H1 (cell line): ENCODE measurements at regions of chr10 and their contacts with region 1.

Region 1: DNA sequence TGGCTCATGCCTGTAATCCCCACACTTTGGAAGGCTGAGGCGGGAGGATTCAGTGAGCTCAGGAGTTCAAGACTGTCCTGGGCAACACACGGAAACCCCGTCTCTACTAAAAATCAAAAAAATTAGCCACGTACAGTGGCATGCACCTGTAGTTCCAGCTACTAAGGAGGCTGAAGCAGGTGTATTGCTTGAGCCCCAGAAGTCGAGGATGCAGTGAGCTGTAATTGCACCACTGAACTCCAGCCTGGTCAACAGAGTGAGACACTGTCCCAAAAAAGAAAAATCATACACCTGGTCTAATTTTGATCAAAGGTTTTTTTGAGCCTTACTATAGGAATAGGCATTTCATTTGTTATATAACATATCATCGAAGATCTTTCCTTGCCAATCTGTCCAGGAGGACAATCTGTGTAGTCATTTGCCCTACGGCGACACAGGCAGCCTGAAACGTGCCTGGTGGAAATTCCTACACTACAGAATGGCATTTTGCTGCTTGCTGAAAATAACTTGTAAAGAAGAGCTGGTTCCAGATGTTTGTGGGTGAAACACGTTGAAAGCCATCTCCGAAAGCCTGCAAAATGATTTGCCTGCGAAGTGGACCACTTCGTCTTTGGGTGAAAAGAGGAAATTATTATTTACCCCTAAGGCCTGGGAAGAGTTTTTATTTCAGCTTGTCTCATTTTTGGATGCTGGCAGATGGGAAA is 31.3 kb upstream of the GDI2 start:
- DNase-seq: no peak
- H3K4me3 ChIP-seq: no peak overlapping the region
- H3K27ac ChIP-seq: no peak overlapping the region
- H3K4me1 ChIP-seq: peaks cover 0 to 2% (median 0%) of the 10 kb centered on the region in 4 experiments; a peak in 1 of 7 replicates
- H3K27me3 ChIP-seq: no peaks in the 10 kb centered on the region
- CTCF ChIP-seq: no peak
- EP300 ChIP-seq: no peak
- POLR2A ChIP-seq: no peak
- RAD21 ChIP-seq: no peak

Region 2: DNA sequence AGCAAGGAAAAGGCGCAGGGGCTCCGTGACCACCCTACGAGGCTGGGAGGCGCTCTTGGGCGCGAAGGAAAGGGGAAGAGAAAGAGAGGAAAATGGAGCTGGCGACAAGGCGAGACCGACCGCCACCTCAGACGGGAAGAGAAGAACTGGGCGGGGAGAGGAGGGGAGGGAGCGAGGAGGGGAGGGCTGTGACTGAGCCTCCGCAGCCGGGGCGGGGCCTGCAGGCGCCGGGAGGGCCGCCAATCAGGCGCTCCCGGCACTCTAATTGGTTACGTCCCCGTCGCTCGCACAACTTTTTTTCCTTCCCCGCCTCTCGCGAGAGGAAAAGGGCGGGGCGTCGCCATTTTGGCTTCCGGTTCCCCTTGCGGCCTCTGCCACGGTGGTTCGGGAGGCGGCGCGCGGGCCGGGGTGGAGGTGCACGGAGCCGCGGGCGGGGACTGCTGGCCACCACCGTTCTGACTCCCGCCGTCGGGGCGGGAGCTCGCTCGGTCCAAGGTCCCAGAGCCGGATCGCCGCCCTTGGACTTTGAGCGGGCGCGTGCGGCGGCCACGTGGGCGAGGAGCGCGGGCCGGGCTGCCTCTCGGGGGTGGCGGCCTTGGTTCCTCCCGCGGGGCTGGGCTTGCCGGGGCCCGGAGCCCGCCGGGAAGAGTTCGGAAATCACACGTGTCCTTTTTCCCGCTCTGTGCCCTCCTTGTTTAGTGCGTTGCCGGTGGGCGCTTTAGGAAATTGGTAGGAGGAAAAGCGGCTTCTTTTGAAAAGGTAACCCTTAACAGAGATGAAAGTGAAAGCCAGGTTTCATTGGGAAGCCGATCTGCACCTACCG is 31.0 kb before region 1 on chr10 and contains the start of gene GDI2:
- CTCF ChIA-PET with region 1: no interaction called
- POLR2A ChIA-PET with region 1: interaction called, 10 read pairs
- DNase-seq: peak; percentile 88 to 96
- H3K4me3 ChIP-seq: peak within 1 kb of the TSS; percentile 90 to 98 (median 94)
- H3K27ac ChIP-seq: peak within 1 kb of the TSS; percentile 90
- H3K4me1 ChIP-seq: peaks cover 0 to 3% (median 0%) of the 10 kb centered on the region in 4 experiments; a peak in 1 of 7 replicates
- H3K27me3 ChIP-seq: no peaks in the 10 kb centered on the region
- CTCF ChIP-seq: no peak
- EP300 ChIP-seq: peak in 1 of 2 experiments; percentile 55; a peak in 1 of 3 replicates
- POLR2A ChIP-seq: peak; percentile 96 to 98
- RAD21 ChIP-seq: no peak; a peak in 1 of 4 replicates
- total RNA-seq, gene GDI2: 368 and 385 TPM in 2 replicates

Region 3: GRCh38 chr10:5832936-5833335 is 11.6 kb before region 1 on chr10:
- CTCF ChIA-PET with region 1: no interaction called
- POLR2A ChIA-PET with region 1: no interaction called
- DNase-seq: no peak
- H3K4me3 ChIP-seq: no peak overlapping the region
- H3K27ac ChIP-seq: no peak overlapping the region
- H3K4me1 ChIP-seq: peaks cover 0 to 2% (median 0%) of the 10 kb centered on the region in 4 experiments; a peak in 1 of 7 replicates
- H3K27me3 ChIP-seq: no peaks in the 10 kb centered on the region
- CTCF ChIP-seq: no peak
- EP300 ChIP-seq: no peak
- POLR2A ChIP-seq: no peak
- RAD21 ChIP-seq: no peak

Region 4: GRCh38 chr10:5862360-5862961 is 18.0 kb after region 1 on chr10:
- CTCF ChIA-PET with region 1: interaction called, 12 read pairs
- POLR2A ChIA-PET with region 1: interaction called, 3 read pairs
- DNase-seq: no peak
- H3K4me3 ChIP-seq: no peak overlapping the region
- H3K27ac ChIP-seq: no peak overlapping the region
- H3K4me1 ChIP-seq: no peaks in the 10 kb centered on the region; a peak in 1 of 7 replicates
- H3K27me3 ChIP-seq: no peaks in the 10 kb centered on the region
- CTCF ChIP-seq: no peak
- EP300 ChIP-seq: no peak
- POLR2A ChIP-seq: no peak
- RAD21 ChIP-seq: no peak